Activated B cell treated with CpG ODN at 0.5 μM for 24 hours (primary cell): ENCODE measurements at regions of chr7 and their contacts with region 1.

Region 1: DNA sequence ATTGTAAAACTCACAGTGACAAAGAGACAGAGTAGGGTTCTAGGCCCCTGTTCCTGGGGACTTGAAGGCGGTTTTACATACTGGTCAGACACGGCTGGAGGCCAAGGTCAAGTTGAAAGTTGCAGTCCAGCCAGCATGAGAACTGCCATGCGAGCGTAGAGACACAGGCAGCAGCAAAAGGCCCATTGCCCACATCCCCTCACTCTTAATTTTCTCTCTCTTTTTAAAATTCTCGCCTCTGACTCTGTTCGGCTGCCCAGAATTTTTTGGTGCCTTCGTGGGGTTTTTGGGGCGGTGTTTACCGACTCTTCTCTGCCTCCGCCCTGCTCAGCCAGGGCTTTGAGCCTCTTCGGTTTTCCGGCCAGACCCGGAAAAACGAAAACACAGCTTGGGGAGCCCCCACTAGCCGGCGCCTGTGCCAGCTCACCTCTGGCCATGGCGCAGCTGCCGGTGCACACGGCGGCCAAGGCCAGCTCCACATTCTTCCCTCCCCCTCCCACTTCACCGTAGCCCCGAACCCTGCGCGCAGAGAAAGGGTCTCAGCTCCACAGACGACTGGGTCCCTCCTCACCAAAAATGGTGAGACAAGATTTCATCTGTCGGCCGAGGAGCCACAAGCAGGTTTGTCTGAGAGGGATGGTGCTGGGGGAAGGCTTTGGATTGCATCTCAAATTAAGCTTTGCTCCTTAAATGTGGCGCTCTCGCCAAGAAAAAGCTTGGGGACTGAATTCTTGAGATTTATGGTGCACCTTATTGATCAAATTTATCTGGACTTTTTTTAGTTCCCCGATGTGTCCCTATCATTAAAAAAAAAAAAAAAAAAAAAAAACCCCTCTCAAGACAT is 2.3 kb upstream of the HOXA13 start:
- DNase-seq: no peak
- ATAC-seq: no peak
- H3K4me3 Mint-ChIP-seq: no peak overlapping the region
- H3K27ac Mint-ChIP-seq: no peak overlapping the region
- H3K4me1 Mint-ChIP-seq: peaks cover 33% of the 10 kb centered on the region
- H3K27me3 Mint-ChIP-seq: peaks cover 76% of the 10 kb centered on the region
- CTCF ChIP-seq: no peak

Region 2: DNA sequence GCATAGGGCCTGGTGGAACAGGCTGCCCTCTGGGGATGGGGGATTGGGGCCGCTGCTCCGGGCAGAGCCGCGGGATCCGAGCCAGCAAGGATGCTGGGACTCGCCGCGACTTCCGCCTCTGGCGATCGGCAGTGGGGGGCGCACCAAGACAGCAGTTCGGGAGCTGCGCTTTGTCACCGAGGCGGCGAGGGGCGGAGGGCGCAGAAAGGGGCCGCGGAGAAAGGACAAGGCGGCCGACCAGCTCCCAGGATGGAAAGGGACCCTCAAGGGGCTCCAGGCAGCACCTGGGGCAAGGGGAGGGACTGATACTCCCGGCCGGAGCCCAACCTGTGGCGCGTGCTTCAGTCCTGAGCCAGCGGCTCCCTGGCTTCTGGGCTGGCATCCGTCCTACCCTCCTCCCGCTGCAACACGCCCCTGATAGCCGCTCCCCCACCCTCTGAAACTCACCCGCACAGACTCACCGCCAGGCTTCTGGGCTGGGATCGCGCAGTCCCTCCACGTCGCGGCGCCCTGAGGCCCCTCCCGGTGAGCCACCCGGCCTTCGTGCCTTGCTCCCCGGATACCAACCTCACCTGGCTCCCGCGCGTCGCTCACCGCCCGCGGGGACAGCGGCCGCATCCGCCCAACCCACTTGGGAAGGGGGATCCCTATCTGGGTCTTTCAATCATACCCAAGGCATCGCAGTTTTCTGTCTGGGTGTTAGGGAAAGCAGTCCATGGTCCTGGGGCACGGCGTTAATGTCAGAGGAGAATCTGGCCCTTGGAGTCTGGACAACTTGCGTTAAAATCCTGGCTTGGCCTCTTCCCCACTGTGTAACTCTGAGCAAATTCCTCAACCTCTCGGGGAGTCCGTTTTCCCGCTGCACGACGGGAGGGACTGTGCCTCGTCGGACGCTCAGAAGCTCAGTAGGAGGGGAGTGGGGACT is 33.4 kb after region 1 on chr7:
- CTCF ChIA-PET with region 1: no interaction called
- POLR2A ChIA-PET with region 1: no interaction called
- intact Hi-C with region 1: loop called (anchors 2 kb)
- DNase-seq: no peak
- ATAC-seq: no peak
- H3K4me3 Mint-ChIP-seq: no peak overlapping the region
- H3K27ac Mint-ChIP-seq: no peak overlapping the region
- H3K4me1 Mint-ChIP-seq: peaks cover 15% of the 10 kb centered on the region
- H3K27me3 Mint-ChIP-seq: peaks cover 60% of the 10 kb centered on the region
- CTCF ChIP-seq: no peak

Region 3: GRCh38 chr7:27863880-27864279 is 661.6 kb after region 1 on chr7:
- CTCF ChIA-PET with region 1: no interaction called
- POLR2A ChIA-PET with region 1: no interaction called
- intact Hi-C with region 1: no loop called
- DNase-seq: no peak
- ATAC-seq: no peak
- H3K4me3 Mint-ChIP-seq: no peak overlapping the region
- H3K27ac Mint-ChIP-seq: no peak overlapping the region
- H3K4me1 Mint-ChIP-seq: no peaks in the 10 kb centered on the region
- H3K27me3 Mint-ChIP-seq: no peaks in the 10 kb centered on the region
- CTCF ChIP-seq: no peak